ENCODE measurements at regions of chr3 and their contacts with region 1.

Region 1: DNA sequence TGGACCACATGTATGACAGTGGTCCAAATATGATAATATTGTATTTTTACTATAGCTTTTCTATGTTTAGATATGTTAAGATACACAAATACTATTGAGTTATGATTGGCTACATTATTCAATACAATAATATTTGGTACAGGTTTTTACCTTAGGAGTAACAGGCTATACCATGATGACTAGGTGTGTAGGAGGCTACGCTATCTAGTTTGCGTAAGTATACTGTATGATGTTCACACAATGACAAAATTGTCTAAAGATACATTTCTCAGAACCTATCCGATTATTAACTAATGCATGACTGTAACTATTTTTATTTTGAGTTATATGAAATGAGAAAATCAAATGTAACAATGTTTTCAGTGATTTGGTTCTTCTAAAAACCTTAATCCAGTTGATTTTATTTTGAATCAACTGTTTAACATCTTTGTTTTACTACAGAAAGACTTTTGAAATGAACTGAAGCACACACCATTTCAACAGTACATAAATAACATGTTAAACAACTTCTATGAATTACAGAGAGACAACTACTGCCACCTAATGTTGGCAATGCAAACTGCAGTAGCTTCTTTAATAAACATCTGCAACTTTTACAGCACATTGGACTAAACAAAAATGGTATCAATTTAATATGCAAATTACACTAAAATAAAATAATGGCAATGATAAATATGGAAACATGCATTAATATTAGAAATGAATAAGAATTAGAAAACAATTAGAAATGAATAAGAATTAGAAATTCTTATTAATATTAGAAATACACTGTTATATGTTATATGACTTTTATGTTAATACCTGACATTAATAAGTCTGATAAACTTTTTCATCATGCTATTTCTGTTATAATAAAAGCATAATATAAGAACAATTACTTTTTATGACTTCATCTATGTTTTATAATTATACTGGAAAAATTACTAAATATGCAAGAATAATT is 255.7 kb downstream of the MBNL1 start:
- DNase-seq: peak; percentile 23
- H3K4me3 ChIP-seq: no peak overlapping the region
- CTCF ChIP-seq: peak; percentile 61

Region 2: GRCh38 chr3:152505926-152506325 is 18.5 kb before region 1 on chr3:
- CTCF ChIA-PET with region 1: interaction called, 10 read pairs
- POLR2A ChIA-PET with region 1: no interaction called
- DNase-seq: no peak
- H3K4me3 ChIP-seq: no peak overlapping the region
- CTCF ChIP-seq: no peak

Region 3: GRCh38 chr3:152511904-152512303 is 12.6 kb before region 1 on chr3:
- CTCF ChIA-PET with region 1: interaction called, 28 read pairs
- POLR2A ChIA-PET with region 1: no interaction called
- DNase-seq: no peak
- H3K4me3 ChIP-seq: no peak overlapping the region
- CTCF ChIP-seq: no peak